GM23248 (cell line): ENCODE measurements at regions of chr7 and their contacts with region 1.

Region 1: GRCh38 chr7:90155206-90155605 is 937 bp downstream of the STEAP1 start:
- DNase-seq: peak; percentile 59
- H3K4me3 ChIP-seq: peak overlapping the region; percentile 80
- H3K27ac ChIP-seq: peak overlapping the region; percentile 94
- H3K4me1 ChIP-seq: peaks cover 45% of the 10 kb centered on the region
- H3K27me3 ChIP-seq: no peaks in the 10 kb centered on the region

Region 2: DNA sequence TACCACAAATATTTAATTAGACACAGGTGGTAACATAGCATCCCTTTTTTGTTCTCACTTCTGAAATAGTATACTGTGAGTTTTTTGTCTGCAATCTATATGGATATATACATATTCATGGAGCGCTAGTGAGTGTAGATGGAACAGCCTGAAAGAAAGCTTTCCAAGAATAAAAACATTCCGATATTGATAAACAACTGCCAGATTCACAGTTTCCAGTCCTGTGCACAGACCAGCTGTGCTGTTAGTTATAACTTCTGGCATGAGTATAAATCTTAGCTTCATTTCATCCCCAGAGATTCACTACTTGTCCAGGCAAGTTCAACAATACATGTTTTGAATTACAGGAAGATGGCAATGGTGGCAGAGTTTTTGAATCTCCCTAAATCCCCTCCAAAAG is 468.0 kb before region 1 on chr7:
- in situ Hi-C with region 1: no loop called
- DNase-seq: no peak
- H3K4me3 ChIP-seq: no peak overlapping the region
- H3K27ac ChIP-seq: no peak overlapping the region
- H3K4me1 ChIP-seq: no peaks in the 10 kb centered on the region
- H3K27me3 ChIP-seq: no peaks in the 10 kb centered on the region

Region 3: DNA sequence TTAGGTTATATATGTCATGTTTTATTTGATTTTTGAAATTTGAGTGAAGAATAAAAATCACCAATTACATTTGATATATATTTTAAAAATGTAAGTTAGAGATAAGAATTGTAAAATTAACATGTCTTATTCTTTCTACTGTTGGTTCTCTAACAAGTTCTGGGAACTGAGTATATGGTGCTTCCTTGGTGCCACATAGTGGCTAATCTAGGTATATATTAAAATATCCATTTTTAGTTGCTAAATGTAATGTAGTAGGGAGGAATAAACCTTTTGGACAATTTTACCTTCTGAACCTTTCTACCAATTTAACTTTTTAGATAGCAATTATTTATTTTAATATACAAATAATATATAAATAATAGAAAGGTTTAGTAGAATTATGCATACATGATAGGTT is 107.2 kb after region 1 on chr7:
- in situ Hi-C with region 1: loop called (anchors 10 kb)
- DNase-seq: peak; percentile 73
- H3K4me3 ChIP-seq: no peak overlapping the region
- H3K27ac ChIP-seq: no peak overlapping the region
- H3K4me1 ChIP-seq: peaks cover 17% of the 10 kb centered on the region
- H3K27me3 ChIP-seq: no peaks in the 10 kb centered on the region

Region 4: GRCh38 chr7:90430614-90431471 is 275.6 kb after region 1 on chr7:
- in situ Hi-C with region 1: loop called (anchors 10 kb)
- DNase-seq: peak; percentile 10
- H3K4me3 ChIP-seq: no peak overlapping the region
- H3K27ac ChIP-seq: no peak overlapping the region
- H3K4me1 ChIP-seq: no peaks in the 10 kb centered on the region
- H3K27me3 ChIP-seq: no peaks in the 10 kb centered on the region